Natural killer cell (primary cell): ENCODE measurements at regions of chr1 and their contacts with region 1.

Region 1: GRCh38 chr1:10430216-10431069 is at the start of gene CENPS:
- DNase-seq: peak; percentile 90 to 95
- ATAC-seq: peak; percentile 82 to 94 (median 86)
- H3K4me3 ChIP-seq: peak within 1 kb of the TSS; percentile 84
- H3K4me3 Mint-ChIP-seq: peak within 1 kb of the TSS; percentile 92
- H3K27ac ChIP-seq: peak within 1 kb of the TSS; percentile 85
- H3K27ac Mint-ChIP-seq: peak within 1 kb of the TSS; percentile 89 to 97
- H3K4me1 ChIP-seq: peaks cover 18% of the 10 kb centered on the region
- H3K4me1 Mint-ChIP-seq: peaks cover 17% of the 10 kb centered on the region in 2 donors
- H3K27me3 ChIP-seq: no peaks in the 10 kb centered on the region
- H3K27me3 Mint-ChIP-seq: no peaks in the 10 kb centered on the region
- CTCF ChIP-seq: peak; percentile 91
- total RNA-seq, gene CENPS: 4.1 to 5.0 (median 4.5) TPM

Region 2: GRCh38 chr1:9874959-9875635 is 555.3 kb before region 1 on chr1:
- intact Hi-C with region 1: loop called (anchors 2 kb)
- DNase-seq: peak; percentile 63 to 89
- ATAC-seq: peak; percentile 82 to 99 (median 98)
- H3K4me3 ChIP-seq: no peak overlapping the region
- H3K4me3 Mint-ChIP-seq: no peak overlapping the region
- H3K27ac ChIP-seq: no peak overlapping the region
- H3K27ac Mint-ChIP-seq: no peak overlapping the region
- H3K4me1 ChIP-seq: peaks cover 8% of the 10 kb centered on the region
- H3K4me1 Mint-ChIP-seq: peaks cover 10 to 12% of the 10 kb centered on the region in 2 donors
- H3K27me3 ChIP-seq: no peaks in the 10 kb centered on the region
- H3K27me3 Mint-ChIP-seq: no peaks in the 10 kb centered on the region
- CTCF ChIP-seq: peak; percentile 93

Region 3: GRCh38 chr1:10209905-10210810 is 220.3 kb before region 1 on chr1 and contains the start of gene KIF1B:
- intact Hi-C with region 1: loop called (anchors 1 kb)
- DNase-seq: peak; percentile 97
- ATAC-seq: peak; percentile 98 to 99 (median 99)
- H3K4me3 ChIP-seq: peak within 1 kb of the TSS; percentile 72
- H3K4me3 Mint-ChIP-seq: peak within 1 kb of the TSS; percentile 92
- H3K27ac ChIP-seq: peak within 1 kb of the TSS; percentile 46
- H3K27ac Mint-ChIP-seq: peak within 1 kb of the TSS; percentile 78 to 94
- H3K4me1 ChIP-seq: peaks cover 15% of the 10 kb centered on the region
- H3K4me1 Mint-ChIP-seq: peaks cover 20 to 26% of the 10 kb centered on the region in 2 donors
- H3K27me3 ChIP-seq: peaks cover 4% of the 10 kb centered on the region
- H3K27me3 Mint-ChIP-seq: no peaks in the 10 kb centered on the region
- CTCF ChIP-seq: peak; percentile 96
- total RNA-seq, gene KIF1B: 15.2 to 22.0 (median 16.3) TPM

Region 4: DNA sequence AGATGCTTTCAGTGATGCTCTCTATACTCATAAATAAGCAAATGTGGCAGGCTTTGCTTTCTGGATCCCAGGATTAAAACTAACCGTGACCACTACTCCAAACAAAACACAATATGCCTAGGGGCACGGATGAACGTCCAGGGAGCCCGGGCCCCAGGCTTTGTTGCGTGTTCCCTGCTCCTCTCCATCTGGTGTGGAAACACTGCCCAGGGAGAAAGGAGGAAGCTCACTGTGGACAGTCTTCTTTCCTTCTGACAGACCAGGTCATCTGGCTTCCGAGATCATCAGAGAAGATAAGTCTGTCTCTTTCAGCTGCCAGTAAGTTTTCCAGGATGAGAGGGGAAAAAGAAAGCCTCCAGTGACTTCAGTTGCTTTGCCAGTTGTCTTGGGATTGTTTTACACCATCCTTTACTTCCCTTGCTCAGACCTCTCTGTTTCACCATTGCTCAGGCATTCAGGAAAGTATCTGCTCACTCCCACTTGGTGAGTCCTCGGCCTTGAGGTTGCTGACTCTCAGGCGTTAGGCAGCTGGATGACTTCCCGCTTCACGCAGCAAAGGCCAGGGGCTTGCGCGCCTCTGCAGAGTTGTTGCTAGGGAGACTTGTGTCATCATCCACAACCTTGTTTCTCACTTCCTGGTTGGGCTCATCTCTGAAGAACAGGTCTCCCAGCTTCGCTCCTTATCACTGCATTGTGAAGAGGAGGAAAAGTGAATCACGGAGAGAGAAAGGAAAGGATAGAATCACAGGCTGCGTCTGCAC is 52.2 kb before region 1 on chr1:
- intact Hi-C with region 1: loop called (anchors 1 kb)
- DNase-seq: no peak
- ATAC-seq: no peak
- H3K4me3 ChIP-seq: no peak overlapping the region
- H3K4me3 Mint-ChIP-seq: no peak overlapping the region
- H3K27ac ChIP-seq: no peak overlapping the region
- H3K27ac Mint-ChIP-seq: no peak overlapping the region
- H3K4me1 ChIP-seq: no peaks in the 10 kb centered on the region
- H3K4me1 Mint-ChIP-seq: no peaks in the 10 kb centered on the region
- H3K27me3 ChIP-seq: no peaks in the 10 kb centered on the region
- H3K27me3 Mint-ChIP-seq: no peaks in the 10 kb centered on the region
- CTCF ChIP-seq: no peak

Region 5: DNA sequence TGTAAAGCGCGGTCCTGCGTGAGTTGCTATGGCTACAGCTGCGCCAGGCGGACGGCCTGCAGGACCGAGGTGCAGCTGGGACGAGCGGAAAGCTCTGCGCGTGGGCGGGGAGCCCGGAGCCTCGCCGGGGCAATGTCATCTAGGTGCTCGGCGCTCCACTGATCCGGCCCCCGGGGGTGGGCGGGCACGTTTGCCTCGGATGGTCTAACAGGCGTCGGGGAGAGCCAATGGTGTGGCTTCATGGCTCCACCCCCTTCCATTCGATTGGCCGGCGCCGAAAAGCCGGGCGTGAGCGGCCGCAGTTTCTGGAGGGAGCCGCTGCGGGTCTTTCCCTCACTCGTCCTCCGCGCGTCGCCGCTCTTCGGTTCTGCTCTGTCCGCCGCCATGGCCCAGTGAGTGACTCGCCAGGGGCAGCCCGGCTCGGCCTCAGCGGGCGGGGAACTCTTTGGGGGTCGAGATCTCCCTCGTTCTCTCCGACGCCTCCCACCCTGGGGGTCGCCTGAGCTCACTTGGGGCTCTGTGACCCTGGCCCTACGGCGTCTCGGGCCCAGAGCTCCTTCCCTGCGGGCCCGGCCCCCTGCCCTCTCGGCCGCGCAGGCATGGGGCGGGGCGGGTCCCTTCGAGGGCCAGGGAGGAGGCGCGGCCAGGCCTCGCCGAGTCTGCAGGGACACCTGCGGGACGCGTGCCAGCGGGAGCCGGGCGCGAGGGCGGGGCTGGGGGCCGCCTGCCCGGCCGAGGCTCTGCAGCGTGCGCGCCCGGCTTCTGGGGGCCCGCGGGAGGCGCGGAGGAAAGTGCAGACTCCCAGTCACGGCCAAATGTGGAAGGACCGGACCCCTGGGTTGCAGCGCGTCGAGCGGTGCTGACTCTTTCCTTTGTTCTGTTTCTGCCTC is 31.5 kb before region 1 on chr1 and contains the start of gene PGD:
- intact Hi-C with region 1: loop called (anchors 2 kb)
- DNase-seq: peak; percentile 96 to 97
- ATAC-seq: peak; percentile 95 to 99 (median 95)
- H3K4me3 ChIP-seq: peak within 1 kb of the TSS; percentile 80
- H3K4me3 Mint-ChIP-seq: peak within 1 kb of the TSS; percentile 94
- H3K27ac ChIP-seq: peak within 1 kb of the TSS; percentile 81
- H3K27ac Mint-ChIP-seq: peak within 1 kb of the TSS; percentile 83 to 87
- H3K4me1 ChIP-seq: peaks cover 18% of the 10 kb centered on the region
- H3K4me1 Mint-ChIP-seq: peaks cover 15 to 19% of the 10 kb centered on the region in 2 donors
- H3K27me3 ChIP-seq: no peaks in the 10 kb centered on the region
- H3K27me3 Mint-ChIP-seq: no peaks in the 10 kb centered on the region
- CTCF ChIP-seq: no peak
- total RNA-seq, gene PGD: 35.8 to 113 (median 39.8) TPM

Region 6: DNA sequence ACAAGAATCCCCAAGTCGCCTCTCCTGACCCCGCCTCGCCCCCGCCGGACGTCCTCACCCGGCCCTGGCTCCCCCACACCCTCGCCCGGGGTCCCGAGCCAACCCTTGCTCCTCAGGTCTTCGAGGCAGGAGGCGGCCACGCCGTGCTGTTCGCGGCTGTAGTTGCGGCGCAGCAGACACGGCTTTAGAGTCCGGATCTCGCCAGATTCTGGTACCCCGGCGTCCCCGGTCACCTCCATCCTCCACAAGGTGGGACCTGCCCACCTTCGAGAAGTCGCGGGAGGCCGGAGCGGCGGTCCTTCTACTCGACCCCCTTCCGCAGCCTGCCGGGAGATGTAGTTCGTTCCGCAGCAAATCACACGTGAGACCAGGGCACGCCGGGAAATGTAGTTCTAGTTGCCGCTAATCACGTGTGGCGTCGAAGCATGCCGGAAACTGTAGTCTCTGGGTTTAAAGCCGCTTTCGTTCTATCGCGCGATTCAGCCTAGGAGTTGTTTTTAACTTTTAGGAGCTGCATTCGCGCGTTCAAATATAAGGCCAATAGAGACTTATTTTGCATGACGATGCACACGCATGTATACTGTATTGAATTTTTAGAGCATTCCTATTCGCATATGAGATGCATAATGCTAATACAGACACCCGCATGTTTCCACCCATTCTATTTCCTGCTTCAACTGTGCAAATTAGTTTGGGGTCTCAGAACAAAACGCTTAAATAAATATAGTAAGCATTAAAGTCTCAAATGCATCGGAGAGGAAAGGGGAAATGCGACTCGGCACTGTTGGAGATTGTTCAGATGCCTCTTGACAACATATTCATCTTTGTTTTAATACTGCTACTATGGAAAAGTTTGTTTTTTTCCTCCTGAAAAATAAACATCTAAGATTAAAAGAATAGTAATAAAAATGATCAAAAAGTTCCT is 42.0 kb after region 1 on chr1 and contains the start of gene DFFA:
- intact Hi-C with region 1: loop called (anchors 5 kb)
- DNase-seq: peak; percentile 85 to 95
- ATAC-seq: peak; percentile 78 to 91 (median 90)
- H3K4me3 ChIP-seq: peak within 1 kb of the TSS; percentile 82
- H3K4me3 Mint-ChIP-seq: peak within 1 kb of the TSS; percentile 96
- H3K27ac ChIP-seq: peak within 1 kb of the TSS; percentile 36
- H3K27ac Mint-ChIP-seq: peak within 1 kb of the TSS; percentile 86 to 93
- H3K4me1 ChIP-seq: peaks cover 36% of the 10 kb centered on the region
- H3K4me1 Mint-ChIP-seq: peaks cover 41 to 54% of the 10 kb centered on the region in 2 donors
- H3K27me3 ChIP-seq: no peaks in the 10 kb centered on the region
- H3K27me3 Mint-ChIP-seq: no peaks in the 10 kb centered on the region
- CTCF ChIP-seq: no peak
- total RNA-seq, gene DFFA: 17.5 to 21.8 (median 21.5) TPM

Region 7: DNA sequence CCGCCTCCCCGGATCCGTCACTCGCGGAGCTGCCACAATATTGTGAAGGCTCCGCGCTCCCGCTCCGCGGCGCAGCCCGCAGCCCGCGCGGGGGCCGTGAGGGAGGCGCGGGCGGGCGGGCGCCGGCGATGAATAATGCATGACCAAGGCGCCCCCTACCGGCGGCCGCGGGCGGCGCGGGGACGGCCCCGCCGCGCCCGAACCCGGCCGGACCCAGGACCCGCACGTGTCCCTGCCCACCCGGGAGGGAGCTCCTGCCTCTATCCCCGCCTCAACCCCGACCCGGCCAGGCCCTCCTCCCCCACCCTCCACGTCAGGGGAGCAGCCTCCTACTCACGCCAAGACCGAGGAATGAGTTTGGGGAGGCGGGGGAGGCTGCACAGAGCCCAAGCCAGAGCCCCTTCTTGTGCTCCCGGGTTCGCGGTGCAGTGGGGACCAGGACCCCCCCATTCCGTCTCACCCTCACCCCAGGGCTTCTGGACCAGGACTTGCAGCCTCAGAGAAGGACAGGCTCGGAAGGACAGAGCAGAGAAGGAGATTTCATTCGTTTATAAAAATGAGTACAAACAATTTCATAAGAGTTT is 436.8 kb after region 1 on chr1:
- intact Hi-C with region 1: loop called (anchors 1 kb)
- DNase-seq: peak; percentile 75 to 77
- ATAC-seq: peak; percentile 79 to 95 (median 92)
- H3K4me3 ChIP-seq: no peak overlapping the region
- H3K4me3 Mint-ChIP-seq: peak overlapping the region; percentile 61
- H3K27ac ChIP-seq: no peak overlapping the region
- H3K27ac Mint-ChIP-seq: no peak overlapping the region
- H3K4me1 ChIP-seq: peaks cover 13% of the 10 kb centered on the region
- H3K4me1 Mint-ChIP-seq: peaks cover 5 to 16% of the 10 kb centered on the region in 2 donors
- H3K27me3 ChIP-seq: peaks cover 32% of the 10 kb centered on the region
- H3K27me3 Mint-ChIP-seq: peaks cover 48 to 56% of the 10 kb centered on the region in 2 donors
- CTCF ChIP-seq: peak; percentile 86